HEK293 (cell line): ENCODE measurements at regions of chr17 and their contacts with region 1.

Region 1: DNA sequence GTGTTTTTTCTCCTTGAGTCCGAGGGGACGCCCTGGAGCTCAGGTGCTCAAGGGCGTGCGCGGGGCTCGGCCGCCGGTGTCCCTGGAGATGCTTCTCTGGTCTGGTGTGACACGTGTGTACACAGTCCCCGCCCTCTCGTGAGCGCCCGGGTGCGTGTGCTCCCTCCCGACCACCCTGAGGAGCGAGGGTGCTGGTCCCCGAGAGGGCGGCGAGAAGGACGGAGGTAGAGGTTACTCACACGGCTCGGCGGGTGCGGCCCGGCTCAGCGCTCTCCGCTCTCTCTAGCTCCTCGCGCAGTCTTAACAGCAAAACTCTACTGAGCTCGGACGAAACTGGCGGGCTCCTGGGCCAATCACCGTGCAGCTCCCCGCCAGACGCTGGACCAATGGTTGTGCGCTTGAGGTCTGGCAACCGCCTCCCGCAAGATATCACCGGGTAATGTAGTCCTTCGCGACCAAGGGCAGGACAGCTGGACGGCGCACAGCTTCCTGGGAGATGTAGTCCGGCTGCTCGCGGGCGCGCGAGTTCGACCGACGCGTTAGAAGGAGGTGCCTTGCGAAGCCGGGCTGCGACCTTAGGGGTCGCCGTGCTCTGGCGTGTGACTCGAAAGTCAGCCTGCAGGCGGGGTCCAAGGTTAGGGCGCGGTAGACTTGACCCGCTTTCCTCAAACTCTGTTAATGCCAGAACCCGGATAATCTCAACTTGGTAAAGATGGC is at the start of gene SLC25A19:
- H3K4me3 ChIP-seq: peak within 1 kb of the TSS; percentile 79
- H3K27ac ChIP-seq: peak within 1 kb of the TSS; percentile 79
- H3K4me1 ChIP-seq: peaks cover 4% of the 10 kb centered on the region; the same call in 1 of the 2 replicates
- CTCF ChIP-seq: peak; percentile 90

Region 2: DNA sequence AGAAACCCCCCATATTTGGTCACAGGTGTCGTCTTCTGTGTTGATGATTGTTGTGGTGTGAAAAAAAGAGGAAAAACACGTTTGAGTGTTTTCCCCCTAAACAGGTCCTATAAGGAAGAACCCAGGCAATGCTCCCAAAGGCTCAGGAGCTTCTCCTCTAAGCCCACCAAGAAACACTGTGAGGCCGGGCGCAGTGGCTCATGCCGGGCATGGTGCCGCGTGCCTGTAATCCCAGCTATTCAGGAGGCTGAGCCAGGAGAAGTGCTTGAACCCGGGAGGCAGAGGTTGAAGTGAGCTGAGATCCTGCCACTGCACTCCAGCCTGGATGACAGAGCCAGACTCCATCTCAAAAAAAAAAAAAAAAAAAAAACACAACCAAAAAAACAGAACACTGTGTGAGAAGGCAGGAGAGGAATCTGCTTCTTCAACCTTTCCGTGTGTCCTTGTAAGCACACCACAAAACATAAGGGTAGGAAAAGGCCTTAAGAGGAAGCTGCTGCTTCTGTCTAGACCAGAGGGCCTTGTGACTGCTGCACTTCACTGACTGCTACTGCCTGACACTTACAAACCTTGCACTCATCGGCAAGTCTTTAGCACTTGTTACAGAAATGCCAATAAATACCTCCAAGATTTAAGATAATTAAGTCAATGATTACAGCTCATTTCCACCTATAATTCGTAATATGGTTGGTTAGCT is 144.3 kb before region 1 on chr17:
- CTCF ChIA-PET with region 1: no interaction called
- POLR2A ChIA-PET with region 1: no interaction called
- H3K4me3 ChIP-seq: no peak overlapping the region
- H3K27ac ChIP-seq: no peak overlapping the region
- H3K4me1 ChIP-seq: no peaks in the 10 kb centered on the region
- CTCF ChIP-seq: no peak

Region 3: GRCh38 chr17:75261336-75262111 is 27.7 kb before region 1 on chr17 and contains the starts of genes GGA3 and MRPS7:
- CTCF ChIA-PET with region 1: interaction called, 6 read pairs
- POLR2A ChIA-PET with region 1: interaction called, 26 read pairs
- H3K4me3 ChIP-seq: peak within 1 kb of the TSS; percentile 99
- H3K27ac ChIP-seq: peak within 1 kb of the TSS; percentile 99
- H3K4me1 ChIP-seq: peaks cover 5% of the 10 kb centered on the region; the same call in 1 of the 2 replicates
- CTCF ChIP-seq: peak; percentile 42; the same call in 1 of the 2 replicates

Region 4: GRCh38 chr17:75277664-75278071 is 11.6 kb before region 1 on chr17:
- CTCF ChIA-PET with region 1: interaction called, 8 read pairs
- POLR2A ChIA-PET with region 1: interaction called, 111 read pairs
- H3K4me3 ChIP-seq: no peak overlapping the region
- H3K27ac ChIP-seq: no peak overlapping the region
- H3K4me1 ChIP-seq: no peaks in the 10 kb centered on the region
- CTCF ChIP-seq: no peak

Region 5: DNA sequence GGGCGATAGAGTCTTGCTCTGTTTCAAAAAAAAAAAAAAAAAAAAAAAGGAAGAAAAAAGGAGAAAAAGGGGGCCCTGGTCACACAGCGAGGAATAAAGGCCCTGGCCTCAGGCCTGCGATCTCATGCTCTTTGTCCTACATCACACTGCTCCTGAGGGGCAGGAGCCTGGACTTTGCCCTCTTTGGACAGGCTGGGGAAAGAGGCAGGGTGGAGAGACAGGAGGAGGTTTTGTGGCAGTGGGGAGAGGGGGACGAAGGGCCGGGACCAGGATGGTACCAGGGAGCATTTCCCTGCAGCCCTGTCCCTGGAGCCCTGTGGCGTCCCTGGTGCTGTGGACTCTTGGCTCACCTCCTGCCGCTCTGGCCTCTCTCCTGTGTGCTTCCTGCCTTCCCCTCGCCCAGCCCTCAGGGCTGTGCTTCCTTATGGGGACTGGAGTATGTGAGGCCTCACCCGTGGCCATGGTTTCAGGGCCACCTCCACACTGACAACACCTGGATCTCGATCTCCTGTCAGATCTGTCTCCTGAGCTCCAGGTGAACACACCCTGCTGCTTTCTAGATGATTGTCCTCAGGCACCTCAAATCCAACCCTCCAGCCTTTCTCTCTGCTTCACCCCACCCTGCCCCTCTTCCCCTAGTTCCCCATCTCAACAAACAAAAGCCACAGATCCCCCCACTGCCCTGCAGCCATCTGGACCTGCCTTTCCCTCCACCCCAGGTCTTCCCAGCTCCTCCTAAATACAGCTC is 19.9 kb after region 1 on chr17:
- CTCF ChIA-PET with region 1: no interaction called
- POLR2A ChIA-PET with region 1: interaction called, 10 read pairs
- H3K4me3 ChIP-seq: no peak overlapping the region
- H3K27ac ChIP-seq: peak overlapping the region; percentile 46; the same call in 1 of the 2 replicates
- H3K4me1 ChIP-seq: no peaks in the 10 kb centered on the region
- CTCF ChIP-seq: no peak

Region 6: GRCh38 chr17:75393523-75394331 is 104.5 kb after region 1 on chr17:
- CTCF ChIA-PET with region 1: interaction called, 9 read pairs
- POLR2A ChIA-PET with region 1: interaction called, 21 read pairs
- H3K4me3 ChIP-seq: peak overlapping the region; percentile 61
- H3K27ac ChIP-seq: peak overlapping the region; percentile 84
- H3K4me1 ChIP-seq: peaks cover 43% of the 10 kb centered on the region
- CTCF ChIP-seq: no peak; the same call in 1 of the 2 replicates

Region 7: GRCh38 chr17:75405365-75406221 is 116.3 kb after region 1 on chr17 and contains the start of gene GRB2:
- CTCF ChIA-PET with region 1: interaction called, 5 read pairs
- POLR2A ChIA-PET with region 1: interaction called, 37 read pairs
- H3K4me3 ChIP-seq: peak within 1 kb of the TSS; percentile 96
- H3K27ac ChIP-seq: peak within 1 kb of the TSS; percentile 94
- H3K4me1 ChIP-seq: 0 out of 2 replicates have a peak, but pooled peaks cover 8% of the 10 kb centered on the region
- CTCF ChIP-seq: no peak

Region 8: DNA sequence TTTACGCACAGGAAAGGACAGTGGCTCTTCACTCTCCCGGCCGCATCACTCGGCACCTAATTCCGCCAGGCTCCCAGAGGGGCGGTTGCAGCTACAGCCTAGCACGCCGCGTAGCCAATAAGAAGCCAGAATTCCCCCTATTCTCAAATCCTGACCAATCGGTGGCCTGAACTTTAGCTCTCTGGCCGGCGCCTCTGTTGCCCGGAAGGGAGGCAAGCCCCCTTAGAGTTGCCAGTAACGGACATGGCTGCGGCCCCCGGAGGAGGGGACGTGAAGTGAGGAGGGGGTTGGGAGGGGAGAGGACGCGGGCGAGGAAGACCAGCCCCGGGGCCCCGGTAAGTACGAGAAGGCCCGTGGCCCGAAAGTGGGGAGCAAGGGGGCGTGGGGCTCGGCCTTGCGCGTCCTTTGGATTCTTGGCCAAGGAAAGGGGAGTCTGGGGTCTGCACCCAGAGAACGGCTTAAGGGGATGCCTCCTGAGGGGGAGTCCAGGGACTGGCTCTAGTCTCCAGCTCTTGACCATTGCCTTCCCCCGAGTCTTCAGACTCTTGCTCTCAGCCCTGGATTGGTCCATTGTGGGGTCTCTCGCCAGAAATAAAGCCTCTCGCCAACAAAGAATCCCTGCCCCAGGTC is 167.3 kb after region 1 on chr17 and contains the start of gene TMEM94:
- CTCF ChIA-PET with region 1: no interaction called
- POLR2A ChIA-PET with region 1: interaction called, 11 read pairs
- H3K4me3 ChIP-seq: peak within 1 kb of the TSS; percentile 64
- H3K27ac ChIP-seq: peak within 1 kb of the TSS; percentile 84
- H3K4me1 ChIP-seq: peaks cover 20% of the 10 kb centered on the region
- CTCF ChIP-seq: no peak